Activated CD4-positive, alpha-beta memory T cell treated with anti-CD3 and anti-CD28 coated beads for 36 hours (primary cell): ENCODE measurements at regions of chr12 and their contacts with region 1.

Region 1: DNA sequence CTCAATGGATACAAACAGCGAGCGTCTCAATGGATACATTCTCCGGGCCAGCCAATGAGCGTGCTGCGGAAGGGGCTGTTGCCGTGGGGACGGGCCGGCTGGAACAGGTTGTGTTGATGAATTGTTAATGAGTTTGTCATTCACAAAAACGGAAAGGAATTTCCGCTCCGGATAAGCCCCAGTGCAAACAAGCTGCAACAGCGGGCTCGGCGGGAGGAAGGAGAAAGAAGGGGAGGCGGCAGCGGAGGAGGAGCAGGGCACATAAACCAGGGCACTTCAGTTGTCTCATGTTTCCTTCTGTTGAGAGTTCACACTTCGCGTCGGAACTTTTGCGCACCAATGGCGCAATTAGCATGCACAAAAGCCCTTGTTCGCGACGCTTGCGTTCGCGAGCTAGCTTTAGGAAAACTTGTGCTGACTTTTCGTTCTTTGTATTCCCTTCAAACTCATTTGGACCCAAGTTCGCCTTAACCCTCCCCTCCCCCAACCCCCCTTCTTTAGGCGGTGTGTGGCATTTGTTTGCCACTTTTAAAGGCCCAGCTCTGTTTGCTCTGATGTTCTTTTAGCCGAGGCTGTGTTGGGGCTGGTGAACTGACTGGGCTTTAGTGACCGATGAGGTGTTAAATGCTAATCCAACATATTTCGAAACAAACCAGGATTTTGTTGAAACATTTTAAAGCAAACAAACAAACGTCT is at the start of gene DUSP6:
- DNase-seq: peak; percentile 97
- H3K4me3 Mint-ChIP-seq: peak within 1 kb of the TSS; percentile 92
- H3K27ac Mint-ChIP-seq: peak within 1 kb of the TSS; percentile 96
- H3K4me1 Mint-ChIP-seq: peaks cover 36% of the 10 kb centered on the region
- H3K27me3 Mint-ChIP-seq: peaks cover 2% of the 10 kb centered on the region
- total RNA-seq, gene DUSP6: 86.7 to 87.9 TPM

Region 2: GRCh38 chr12:88241862-88242570 is 1110.6 kb before region 1 on chr12:
- CTCF ChIA-PET with region 1: no interaction called
- POLR2A ChIA-PET with region 1: no interaction called
- intact Hi-C with region 1: loop called (anchors 10 kb)
- DNase-seq: peak; percentile 54
- H3K4me3 Mint-ChIP-seq: no peak overlapping the region
- H3K27ac Mint-ChIP-seq: peak overlapping the region; percentile 83
- H3K4me1 Mint-ChIP-seq: peaks cover 35% of the 10 kb centered on the region
- H3K27me3 Mint-ChIP-seq: peaks cover 13% of the 10 kb centered on the region

Region 3: DNA sequence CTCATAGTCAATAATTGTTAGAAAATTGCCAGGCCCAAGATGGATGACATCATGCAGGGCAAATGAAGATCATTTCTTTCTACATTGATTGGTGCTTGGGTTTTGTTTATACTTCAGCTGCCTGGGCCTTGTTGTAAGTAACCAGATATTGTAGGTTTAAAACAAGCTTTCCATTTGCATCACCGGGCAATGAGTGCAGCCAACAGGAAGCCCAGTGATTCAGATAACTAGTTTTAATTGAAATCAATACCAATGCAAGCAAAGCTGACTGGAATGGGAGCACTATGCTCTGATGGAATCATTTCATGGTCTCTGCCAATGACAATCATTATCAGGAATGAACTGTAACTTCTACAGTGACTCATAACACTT is 279.6 kb before region 1 on chr12:
- CTCF ChIA-PET with region 1: no interaction called
- POLR2A ChIA-PET with region 1: interaction called, 13 read pairs
- intact Hi-C with region 1: loop called (anchors 1 kb)
- DNase-seq: peak; percentile 48
- H3K4me3 Mint-ChIP-seq: no peak overlapping the region
- H3K27ac Mint-ChIP-seq: peak overlapping the region; percentile 86
- H3K4me1 Mint-ChIP-seq: peaks cover 41% of the 10 kb centered on the region
- H3K27me3 Mint-ChIP-seq: no peaks in the 10 kb centered on the region

Region 4: GRCh38 chr12:89225808-89226411 is 126.7 kb before region 1 on chr12:
- CTCF ChIA-PET with region 1: interaction called, 6 read pairs
- POLR2A ChIA-PET with region 1: interaction called, 38 read pairs
- intact Hi-C with region 1: loop called (anchors 1 kb)
- DNase-seq: peak; percentile 72
- H3K4me3 Mint-ChIP-seq: peak overlapping the region; percentile 34
- H3K27ac Mint-ChIP-seq: peak overlapping the region; percentile 99
- H3K4me1 Mint-ChIP-seq: peaks cover 65% of the 10 kb centered on the region
- H3K27me3 Mint-ChIP-seq: no peaks in the 10 kb centered on the region

Region 5: DNA sequence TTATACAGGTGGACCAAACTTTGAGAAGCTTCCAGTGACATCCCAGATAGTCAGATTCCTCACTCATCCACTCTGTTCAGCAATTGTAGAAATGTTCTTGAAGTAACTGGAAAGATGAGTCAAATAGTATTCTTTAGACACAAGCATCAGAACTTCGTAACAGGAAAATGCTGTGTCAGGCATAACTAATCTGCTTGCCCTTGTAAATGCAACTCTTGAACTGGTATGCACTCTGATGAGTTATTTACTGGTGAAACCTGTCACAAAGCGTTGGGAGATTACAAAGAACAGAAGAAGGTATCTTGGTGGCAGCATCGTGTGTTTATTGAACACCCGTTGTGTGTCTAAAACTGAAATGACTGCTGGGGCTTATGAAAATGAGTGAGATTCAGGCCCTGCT is 10.4 kb after region 1 on chr12:
- CTCF ChIA-PET with region 1: interaction called, 5 read pairs
- POLR2A ChIA-PET with region 1: interaction called, 8 read pairs
- intact Hi-C with region 1: loop called (anchors 1 kb)
- DNase-seq: peak; percentile 18
- H3K4me3 Mint-ChIP-seq: no peak overlapping the region
- H3K27ac Mint-ChIP-seq: peak overlapping the region; percentile 74
- H3K4me1 Mint-ChIP-seq: peaks cover 16% of the 10 kb centered on the region
- H3K27me3 Mint-ChIP-seq: no peaks in the 10 kb centered on the region

Region 6: GRCh38 chr12:89470741-89471509 is 118.3 kb after region 1 on chr12:
- CTCF ChIA-PET with region 1: interaction called, 3 read pairs
- POLR2A ChIA-PET with region 1: interaction called, 4 read pairs
- intact Hi-C with region 1: loop called (anchors 2 kb)
- DNase-seq: no peak
- H3K4me3 Mint-ChIP-seq: no peak overlapping the region
- H3K27ac Mint-ChIP-seq: peak overlapping the region; percentile 64
- H3K4me1 Mint-ChIP-seq: peaks cover 58% of the 10 kb centered on the region
- H3K27me3 Mint-ChIP-seq: no peaks in the 10 kb centered on the region

Region 7: GRCh38 chr12:89949457-89950195 is 597.0 kb after region 1 on chr12:
- CTCF ChIA-PET with region 1: no interaction called
- POLR2A ChIA-PET with region 1: no interaction called
- intact Hi-C with region 1: loop called (anchors 10 kb)
- DNase-seq: peak; percentile 60
- H3K4me3 Mint-ChIP-seq: peak overlapping the region; percentile 4
- H3K27ac Mint-ChIP-seq: peak overlapping the region; percentile 26
- H3K4me1 Mint-ChIP-seq: peaks cover 51% of the 10 kb centered on the region
- H3K27me3 Mint-ChIP-seq: no peaks in the 10 kb centered on the region